ENCODE measurements at regions of chr16 and their contacts with region 1.

Region 1: DNA sequence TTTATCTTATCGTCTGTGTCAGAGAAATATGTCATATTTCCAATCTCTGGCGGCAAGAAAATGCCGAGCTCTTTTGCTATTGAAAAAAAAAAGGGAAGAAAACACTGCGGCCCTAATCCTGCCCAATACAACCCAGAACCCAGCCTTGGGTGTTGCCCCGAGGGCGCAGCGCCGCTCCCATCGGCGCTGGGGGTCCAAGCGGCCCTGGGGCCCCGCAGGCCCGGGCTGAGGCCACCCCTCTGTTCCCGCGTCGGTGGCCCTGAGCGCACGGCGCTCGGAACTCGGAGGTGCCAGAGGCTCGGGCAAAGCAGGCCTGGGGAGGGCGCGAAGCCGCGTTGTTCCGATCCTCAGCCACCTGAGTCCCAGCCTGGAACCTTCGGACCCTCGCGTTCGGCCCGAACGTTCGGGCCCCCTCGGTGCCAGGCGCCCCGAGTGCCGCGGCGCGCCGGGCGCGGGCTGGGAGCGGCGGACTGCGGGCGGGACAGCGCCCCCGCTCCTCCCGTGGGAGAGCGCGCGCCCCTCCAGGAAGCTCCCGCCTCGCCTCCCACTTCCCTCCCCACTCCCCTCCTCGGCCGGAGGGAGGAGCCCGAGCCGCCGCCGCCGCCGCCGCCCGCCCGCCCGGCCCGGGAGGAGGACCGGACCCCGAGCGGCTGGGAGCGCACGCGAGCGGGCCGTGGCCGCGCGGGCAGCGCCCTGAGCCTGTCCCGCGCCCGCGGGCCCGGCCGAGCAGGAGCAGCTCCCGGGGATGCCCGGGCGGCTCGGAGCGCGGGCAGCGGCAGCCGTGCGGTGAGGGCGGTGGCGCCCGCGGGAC is at the start of gene CPNE2:
- DNase-seq: peak in 1 of 2 donors; percentile 78
- H3K4me3 ChIP-seq: peak within 1 kb of the TSS; percentile 89 to 90
- H3K27ac ChIP-seq: peak within 1 kb of the TSS; percentile 83 to 85
- H3K4me1 ChIP-seq: peaks cover 12 to 19% of the 10 kb centered on the region in 2 donors
- H3K27me3 ChIP-seq: no peaks in the 10 kb centered on the region
- CTCF ChIP-seq: no peak
- total RNA-seq, gene CPNE2: 36.6 TPM

Region 2: GRCh38 chr16:57137043-57137442 is 44.9 kb after region 1 on chr16:
- intact Hi-C with region 1: no loop called
- DNase-seq: no peak
- H3K4me3 ChIP-seq: no peak overlapping the region
- H3K27ac ChIP-seq: no peak overlapping the region
- H3K4me1 ChIP-seq: peaks cover 0 to 3% of the 10 kb centered on the region in 2 donors
- H3K27me3 ChIP-seq: no peaks in the 10 kb centered on the region
- CTCF ChIP-seq: no peak

Region 3: GRCh38 chr16:57147381-57148221 is 55.4 kb after region 1 on chr16:
- intact Hi-C with region 1: no loop called
- DNase-seq: no peak
- H3K4me3 ChIP-seq: no peak overlapping the region
- H3K27ac ChIP-seq: no peak overlapping the region
- H3K4me1 ChIP-seq: peaks cover 0 to 2% of the 10 kb centered on the region in 2 donors
- H3K27me3 ChIP-seq: no peaks in the 10 kb centered on the region
- CTCF ChIP-seq: no peak

Region 4: GRCh38 chr16:57185944-57186871 is 94.0 kb after region 1 on chr16 and contains the starts of genes PSME3IP1 and RSPRY1:
- intact Hi-C with region 1: loop called (anchors 5 kb)
- DNase-seq: peak; percentile 98 to 99
- H3K4me3 ChIP-seq: peak within 1 kb of the TSS; percentile 78 to 94
- H3K27ac ChIP-seq: peak within 1 kb of the TSS; percentile 95 to 96
- H3K4me1 ChIP-seq: peaks cover 5 to 33% of the 10 kb centered on the region in 2 donors
- H3K27me3 ChIP-seq: no peaks in the 10 kb centered on the region
- CTCF ChIP-seq: no peak
- total RNA-seq, gene PSME3IP1: 32.6 TPM
- total RNA-seq, gene RSPRY1: 29.3 TPM

Region 5: DNA sequence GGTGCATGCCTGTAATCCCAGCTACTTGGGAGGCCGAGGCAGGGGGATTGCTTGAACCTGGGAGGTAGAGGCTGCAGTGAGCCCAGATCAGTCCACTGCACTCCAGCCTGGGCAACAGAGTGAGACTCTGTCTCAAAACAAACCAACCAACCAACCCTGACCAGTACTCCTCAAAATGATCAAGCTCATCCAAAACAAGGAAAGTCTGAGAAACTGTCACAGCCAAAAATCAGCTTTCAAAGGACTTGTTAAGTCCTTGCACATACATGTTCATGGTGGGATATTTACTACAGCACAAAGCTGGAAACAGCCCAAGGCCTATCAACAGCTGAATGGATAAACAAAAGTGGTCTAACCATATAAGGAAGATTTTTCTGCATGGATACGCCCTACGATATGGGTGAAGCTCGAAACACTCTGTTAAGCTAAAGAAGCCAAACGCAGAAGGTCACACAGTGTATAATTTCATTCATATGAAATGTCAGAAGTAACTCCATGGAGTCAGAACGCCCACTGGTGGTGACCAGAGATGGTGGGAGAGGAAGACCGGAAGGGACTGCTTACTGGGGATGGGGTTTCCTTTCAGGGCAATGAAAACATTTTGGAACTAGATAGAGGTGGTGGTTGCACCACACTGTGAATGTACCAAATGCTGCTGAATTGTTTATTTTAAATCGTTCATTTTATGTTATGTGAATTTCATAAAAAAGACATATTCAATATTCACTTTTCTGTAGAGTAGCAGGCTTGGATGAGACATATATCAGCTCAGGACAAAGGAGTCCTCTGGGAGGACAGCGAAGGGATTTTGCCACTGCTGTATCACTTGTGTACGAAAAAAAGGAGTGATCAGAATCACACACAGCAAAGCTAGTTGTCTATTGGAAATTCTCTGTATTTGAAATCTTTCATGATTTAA is 330.1 kb after region 1 on chr16:
- intact Hi-C with region 1: loop called (anchors 5 kb)
- DNase-seq: peak in 1 of 2 donors; percentile 83
- H3K4me3 ChIP-seq: no peak overlapping the region
- H3K27ac ChIP-seq: peak overlapping the region; percentile 28 to 58
- H3K4me1 ChIP-seq: peaks cover 0 to 24% of the 10 kb centered on the region in 2 donors
- H3K27me3 ChIP-seq: no peaks in the 10 kb centered on the region
- CTCF ChIP-seq: peak; percentile 71 to 87 (median 79)

Region 6: DNA sequence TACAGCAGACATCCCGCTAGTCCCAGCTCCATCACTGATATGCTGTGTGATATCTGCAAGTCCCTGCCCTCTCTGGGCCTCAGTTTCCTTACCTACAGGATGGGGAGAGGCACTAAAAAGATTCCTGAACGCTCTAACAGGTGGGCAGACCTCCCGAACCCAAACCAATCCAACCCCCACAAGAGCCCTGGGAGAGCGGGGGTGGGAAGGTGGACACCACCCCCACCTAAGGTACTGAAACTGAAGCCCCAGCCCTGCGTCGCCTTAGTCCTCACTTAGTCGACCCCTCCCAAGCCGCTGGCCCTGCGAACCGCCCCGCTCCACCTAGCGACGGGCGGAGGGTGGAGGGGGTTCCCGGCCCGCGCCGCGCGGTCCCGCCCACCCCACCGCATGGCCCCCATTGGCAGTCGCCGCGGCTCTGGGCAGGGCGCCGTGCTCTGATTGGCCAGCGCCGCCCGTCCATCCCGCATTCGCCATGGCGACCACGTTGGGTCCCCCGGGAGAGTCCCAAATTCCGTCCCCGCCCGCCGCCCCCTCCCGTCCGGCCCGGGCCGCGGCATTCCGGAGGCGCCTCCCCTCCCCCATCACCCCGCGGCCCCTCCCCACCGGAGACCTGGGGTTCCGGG is 443.6 kb after region 1 on chr16:
- intact Hi-C with region 1: loop called (anchors 10 kb)
- DNase-seq: peak; percentile 74 to 97
- H3K4me3 ChIP-seq: peak overlapping the region; percentile 92 to 93
- H3K27ac ChIP-seq: peak overlapping the region; percentile 89 to 90
- H3K4me1 ChIP-seq: peaks cover 19 to 24% of the 10 kb centered on the region in 2 donors
- H3K27me3 ChIP-seq: no peaks in the 10 kb centered on the region
- CTCF ChIP-seq: peak in 2 of 3 experiments; percentile 21 to 27

Measured in ascending aorta (tissue), 2 donors.